ENCODE measurements at regions of chr5 and their contacts with region 1.

Region 1: GRCh38 chr5:6291961-6292360 is 86.4 kb downstream of the MED10 start:
- DNase-seq: no peak
- ATAC-seq: peak; percentile 74
- H3K4me3 ChIP-seq: no peak overlapping the region
- H3K27ac ChIP-seq: no peak overlapping the region
- H3K4me1 ChIP-seq: no peaks in the 10 kb centered on the region
- H3K27me3 ChIP-seq: no peaks in the 10 kb centered on the region
- CTCF ChIP-seq: peak; percentile 34 to 55 (median 46); a peak in 5 of 6 replicates
- EP300 ChIP-seq: no peak
- POLR2A ChIP-seq: no peak
- RAD21 ChIP-seq: peak; percentile 60

Region 2: GRCh38 chr5:6246820-6247437 is 45.0 kb before region 1 on chr5:
- CTCF ChIA-PET with region 1: no interaction called
- POLR2A ChIA-PET with region 1: no interaction called
- RAD21 ChIA-PET with region 1: no interaction called
- SMC1A ChIA-PET with region 1: no interaction called
- in situ Hi-C with region 1: no loop called
- intact Hi-C with region 1: no loop called
- DNase-seq: peak; percentile 23
- ATAC-seq: peak; percentile 71
- H3K4me3 ChIP-seq: no peak overlapping the region
- H3K27ac ChIP-seq: no peak overlapping the region
- H3K4me1 ChIP-seq: 0 out of 2 replicates have a peak, but pooled peaks cover 5% of the 10 kb centered on the region
- H3K27me3 ChIP-seq: no peaks in the 10 kb centered on the region
- CTCF ChIP-seq: no peak
- EP300 ChIP-seq: no peak
- POLR2A ChIP-seq: no peak
- RAD21 ChIP-seq: no peak

Region 3: DNA sequence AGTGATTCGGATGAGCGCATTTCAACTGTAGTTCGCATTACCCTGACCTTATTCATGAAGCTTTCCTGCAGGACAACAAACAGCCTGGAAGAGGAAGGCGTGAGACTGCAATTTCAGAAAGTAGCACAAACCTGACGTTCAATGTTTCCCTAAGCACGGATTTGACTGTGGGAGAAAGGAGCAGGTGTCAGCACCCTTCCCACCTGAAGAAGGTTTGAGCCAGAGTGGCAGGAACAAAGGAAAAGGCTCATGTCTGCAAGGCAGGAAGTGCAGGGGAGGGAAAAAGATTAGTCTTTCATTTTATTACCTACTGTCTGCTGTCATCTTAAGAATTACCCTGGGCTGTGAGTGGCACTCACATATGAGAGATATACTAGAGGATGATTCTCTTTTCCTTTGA is 27.6 kb before region 1 on chr5:
- CTCF ChIA-PET with region 1: no interaction called
- POLR2A ChIA-PET with region 1: no interaction called
- RAD21 ChIA-PET with region 1: no interaction called
- SMC1A ChIA-PET with region 1: no interaction called
- in situ Hi-C with region 1: no loop called
- intact Hi-C with region 1: no loop called
- DNase-seq: no peak
- ATAC-seq: no peak
- H3K4me3 ChIP-seq: no peak overlapping the region
- H3K27ac ChIP-seq: no peak overlapping the region
- H3K4me1 ChIP-seq: no peaks in the 10 kb centered on the region
- H3K27me3 ChIP-seq: no peaks in the 10 kb centered on the region
- CTCF ChIP-seq: no peak
- EP300 ChIP-seq: no peak
- POLR2A ChIP-seq: no peak
- RAD21 ChIP-seq: no peak

Region 4: DNA sequence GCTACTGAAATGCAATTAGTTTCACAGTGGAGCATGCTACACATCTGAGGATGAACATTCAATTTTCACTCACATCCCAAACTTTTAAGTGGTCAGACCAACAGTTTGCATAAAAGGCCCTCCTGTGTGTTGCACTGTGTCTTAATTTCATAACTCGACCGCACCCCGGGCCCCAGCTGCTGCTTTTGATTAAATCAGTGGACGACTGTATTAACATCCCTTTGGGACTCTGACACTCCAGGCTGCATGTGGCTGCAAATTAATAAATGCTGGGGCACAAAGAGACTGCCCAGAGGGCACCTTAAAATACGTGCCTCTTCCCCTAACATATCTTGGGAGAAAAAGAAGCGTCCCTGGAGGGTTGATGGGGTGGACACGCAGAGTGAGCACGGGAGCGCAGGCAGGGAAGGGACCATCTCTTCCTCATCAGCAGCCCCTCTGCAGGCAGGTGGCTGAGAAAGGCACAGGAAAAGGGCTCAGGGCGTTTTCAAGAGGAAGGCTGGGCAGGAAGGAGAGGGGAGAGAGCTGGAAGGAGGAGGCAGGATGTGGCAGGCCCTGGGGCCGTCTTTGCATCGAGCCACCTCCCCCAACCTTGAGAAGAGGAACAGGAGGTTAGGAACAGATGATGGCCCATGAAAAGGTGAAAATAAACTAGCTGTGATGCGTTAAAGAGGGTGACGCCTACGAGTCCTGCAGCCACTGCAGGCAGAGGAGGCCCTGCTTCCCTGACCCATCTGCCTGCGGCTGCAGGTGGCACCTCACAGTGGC is 67.8 kb after region 1 on chr5:
- CTCF ChIA-PET with region 1: no interaction called
- POLR2A ChIA-PET with region 1: no interaction called
- RAD21 ChIA-PET with region 1: no interaction called
- SMC1A ChIA-PET with region 1: no interaction called
- in situ Hi-C with region 1: no loop called
- intact Hi-C with region 1: no loop called
- DNase-seq: no peak
- ATAC-seq: no peak; the same call in 2 of the 3 replicates
- H3K4me3 ChIP-seq: no peak overlapping the region
- H3K27ac ChIP-seq: no peak overlapping the region
- H3K4me1 ChIP-seq: peaks cover 4% of the 10 kb centered on the region; the same call in 1 of the 2 replicates
- H3K27me3 ChIP-seq: no peaks in the 10 kb centered on the region
- CTCF ChIP-seq: no peak
- EP300 ChIP-seq: no peak
- POLR2A ChIP-seq: no peak
- RAD21 ChIP-seq: no peak

Region 5: DNA sequence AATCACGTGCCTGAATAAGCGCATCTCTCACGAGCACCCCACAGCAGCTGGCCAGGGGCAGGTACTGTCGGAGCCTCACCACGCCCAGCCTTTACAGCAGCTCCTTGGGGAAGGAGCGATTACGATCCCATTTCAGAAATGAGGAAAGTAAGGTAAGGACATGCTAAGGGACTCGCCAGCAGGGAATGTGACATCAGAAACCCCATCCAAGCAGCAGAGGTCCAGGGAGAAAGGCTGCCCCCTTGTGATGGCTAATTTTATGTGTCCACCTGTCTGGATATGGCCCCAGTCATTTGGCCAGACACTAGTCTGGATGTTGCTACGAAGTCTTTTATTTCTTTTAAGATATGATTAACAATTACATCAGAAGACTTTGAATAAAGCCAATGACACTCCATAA is 233.9 kb after region 1 on chr5:
- CTCF ChIA-PET with region 1: no interaction called
- POLR2A ChIA-PET with region 1: no interaction called
- RAD21 ChIA-PET with region 1: no interaction called
- SMC1A ChIA-PET with region 1: no interaction called
- in situ Hi-C with region 1: no loop called
- intact Hi-C with region 1: loop called (anchors 5 kb)
- DNase-seq: no peak
- ATAC-seq: peak; percentile 82
- H3K4me3 ChIP-seq: no peak overlapping the region
- H3K27ac ChIP-seq: no peak overlapping the region
- H3K4me1 ChIP-seq: no peaks in the 10 kb centered on the region
- H3K27me3 ChIP-seq: peaks cover 0 to 4% of the 10 kb centered on the region in 2 experiments; a peak in 1 of 4 replicates
- CTCF ChIP-seq: peak; percentile 40 to 68 (median 43); a peak in 4 of 6 replicates
- EP300 ChIP-seq: no peak
- POLR2A ChIP-seq: no peak
- RAD21 ChIP-seq: peak; percentile 61

Region 6: DNA sequence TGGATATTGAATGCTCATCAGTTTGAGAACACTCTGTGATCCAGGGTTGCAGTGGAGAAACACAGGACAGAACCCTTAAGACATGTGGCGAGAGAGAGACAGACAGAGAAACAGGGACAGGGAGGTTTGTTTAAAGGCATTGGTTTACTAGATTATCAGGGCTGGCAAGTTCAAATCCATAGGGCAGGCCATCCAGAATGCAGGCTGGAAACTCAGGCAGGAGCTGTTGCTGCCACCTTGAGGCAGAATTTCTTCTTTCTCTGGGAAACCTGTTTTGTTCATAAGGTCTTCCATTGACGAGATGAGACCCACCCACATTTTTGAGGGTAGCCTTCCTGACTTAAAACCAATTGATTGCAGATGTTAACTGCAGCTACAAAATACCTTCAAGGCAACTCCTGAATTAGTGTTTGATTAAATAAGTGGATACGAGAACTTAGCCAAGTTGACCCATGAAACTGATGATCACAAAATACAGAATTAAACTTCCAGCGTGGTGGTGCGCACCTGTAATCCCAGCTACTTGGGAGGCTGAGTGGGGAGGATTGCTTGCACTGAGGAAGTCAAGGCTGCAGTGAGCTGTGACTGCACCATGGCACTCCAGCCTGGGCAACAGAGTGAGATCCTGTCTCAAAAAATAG is 285.0 kb after region 1 on chr5:
- CTCF ChIA-PET with region 1: interaction called, 5 read pairs
- POLR2A ChIA-PET with region 1: no interaction called
- RAD21 ChIA-PET with region 1: no interaction called
- SMC1A ChIA-PET with region 1: interaction called, 3 read pairs
- in situ Hi-C with region 1: no loop called
- intact Hi-C with region 1: loop called (anchors 1 kb)
- DNase-seq: peak; percentile 4
- ATAC-seq: peak; percentile 70
- H3K4me3 ChIP-seq: no peak overlapping the region
- H3K27ac ChIP-seq: no peak overlapping the region
- H3K4me1 ChIP-seq: no peaks in the 10 kb centered on the region
- H3K27me3 ChIP-seq: peaks cover 0 to 3% of the 10 kb centered on the region in 2 experiments; a peak in 3 of 4 replicates
- CTCF ChIP-seq: peak; percentile 49 to 70 (median 53); a peak in 5 of 6 replicates
- EP300 ChIP-seq: no peak
- POLR2A ChIP-seq: no peak
- RAD21 ChIP-seq: peak; percentile 77